ENCODE measurements at regions of chr10 and their contacts with region 1.

Region 1: GRCh38 chr10:88932539-88933256 is 19.9 kb downstream of the ACTA2 start:
- DNase-seq: peak in 7 of 9 experiments; percentile 17 to 72 (median 34)
- ATAC-seq: peak; percentile 78
- H3K4me3 ChIP-seq: no peak overlapping the region
- H3K4me3 Mint-ChIP-seq: no peak overlapping the region
- H3K27ac ChIP-seq: no peak overlapping the region
- H3K27ac Mint-ChIP-seq: no peak overlapping the region
- H3K4me1 ChIP-seq: peaks cover 5% of the 10 kb centered on the region
- H3K4me1 Mint-ChIP-seq: peaks cover 15% of the 10 kb centered on the region
- H3K27me3 ChIP-seq: no peaks in the 10 kb centered on the region
- H3K27me3 Mint-ChIP-seq: no peaks in the 10 kb centered on the region
- CTCF ChIP-seq: peak; percentile 75

Region 2: GRCh38 chr10:88565072-88565471 is 367.6 kb before region 1 on chr10:
- CTCF ChIA-PET with region 1: interaction called, 23 read pairs
- POLR2A ChIA-PET with region 1: no interaction called
- intact Hi-C with region 1: loop called (anchors 1 to 5 kb)
- DNase-seq: peak in 2 of 9 experiments; percentile 17 to 29
- ATAC-seq: no peak
- H3K4me3 ChIP-seq: no peak overlapping the region
- H3K4me3 Mint-ChIP-seq: no peak overlapping the region
- H3K27ac ChIP-seq: no peak overlapping the region
- H3K27ac Mint-ChIP-seq: no peak overlapping the region
- H3K4me1 ChIP-seq: no peaks in the 10 kb centered on the region
- H3K4me1 Mint-ChIP-seq: peaks cover 4% of the 10 kb centered on the region
- H3K27me3 ChIP-seq: no peaks in the 10 kb centered on the region
- H3K27me3 Mint-ChIP-seq: no peaks in the 10 kb centered on the region
- CTCF ChIP-seq: peak; percentile 31

Region 3: DNA sequence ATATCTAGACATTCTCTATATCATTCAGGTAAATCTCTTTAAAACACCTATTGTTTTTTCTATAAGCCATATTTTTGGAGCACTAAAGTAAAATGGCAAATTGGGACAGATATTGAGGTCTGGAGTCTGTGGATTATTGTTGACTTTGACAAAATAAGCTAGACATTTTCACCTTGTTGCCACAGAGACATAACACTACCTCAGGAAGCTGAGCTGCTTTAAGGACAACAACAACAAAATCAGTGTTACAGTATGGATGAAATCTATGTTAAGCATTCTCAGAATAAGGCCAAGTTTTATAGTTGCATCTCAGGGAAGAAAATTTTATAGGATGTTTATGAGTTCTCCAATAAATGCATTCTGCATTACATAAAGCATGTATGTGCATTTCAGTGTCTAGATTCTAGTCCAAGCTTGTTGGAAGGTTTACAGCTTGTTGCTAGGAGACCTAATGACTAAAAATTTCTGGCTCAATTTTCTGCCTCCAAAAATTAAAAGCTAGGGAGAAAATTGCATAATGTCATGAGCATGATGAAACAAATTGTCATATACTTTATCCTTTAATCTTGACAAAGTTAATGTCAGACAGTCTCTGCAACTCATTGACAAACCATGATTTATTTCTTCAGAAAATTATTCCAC is 111.8 kb before region 1 on chr10:
- CTCF ChIA-PET with region 1: interaction called, 13 read pairs
- POLR2A ChIA-PET with region 1: interaction called, 3 read pairs
- intact Hi-C with region 1: no loop called
- DNase-seq: no peak
- ATAC-seq: no peak
- H3K4me3 ChIP-seq: no peak overlapping the region
- H3K4me3 Mint-ChIP-seq: no peak overlapping the region
- H3K27ac ChIP-seq: no peak overlapping the region
- H3K27ac Mint-ChIP-seq: no peak overlapping the region
- H3K4me1 ChIP-seq: peaks cover 15% of the 10 kb centered on the region
- H3K4me1 Mint-ChIP-seq: peaks cover 43% of the 10 kb centered on the region
- H3K27me3 ChIP-seq: no peaks in the 10 kb centered on the region
- H3K27me3 Mint-ChIP-seq: no peaks in the 10 kb centered on the region
- CTCF ChIP-seq: no peak

Region 4: GRCh38 chr10:88843171-88843570 is 89.5 kb before region 1 on chr10:
- CTCF ChIA-PET with region 1: interaction called, 353 read pairs
- POLR2A ChIA-PET with region 1: no interaction called
- intact Hi-C with region 1: no loop called
- DNase-seq: no peak
- ATAC-seq: no peak
- H3K4me3 ChIP-seq: no peak overlapping the region
- H3K4me3 Mint-ChIP-seq: no peak overlapping the region
- H3K27ac ChIP-seq: no peak overlapping the region
- H3K27ac Mint-ChIP-seq: no peak overlapping the region
- H3K4me1 ChIP-seq: no peaks in the 10 kb centered on the region
- H3K4me1 Mint-ChIP-seq: no peaks in the 10 kb centered on the region
- H3K27me3 ChIP-seq: no peaks in the 10 kb centered on the region
- H3K27me3 Mint-ChIP-seq: no peaks in the 10 kb centered on the region
- CTCF ChIP-seq: no peak

Region 5: DNA sequence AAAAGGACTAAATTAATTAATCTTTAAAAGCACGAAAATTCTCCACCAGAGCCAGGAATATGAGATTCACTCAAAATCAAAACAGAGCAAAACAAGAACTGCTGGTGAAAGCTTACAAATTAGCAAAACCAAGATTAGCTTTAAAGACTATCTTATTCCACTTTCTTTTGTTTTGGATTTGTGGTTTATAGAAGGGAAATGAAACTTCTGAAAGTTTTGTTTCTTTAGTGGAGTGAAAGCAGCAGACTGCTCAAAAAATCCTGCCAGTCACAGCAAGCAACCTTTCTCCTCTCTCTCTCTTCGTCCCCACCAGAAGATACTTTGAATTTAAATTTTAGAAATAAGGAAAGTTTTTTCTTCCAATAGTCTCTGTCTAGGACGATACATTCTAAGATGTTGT is 12.1 kb after region 1 on chr10:
- CTCF ChIA-PET with region 1: interaction called, 52 read pairs
- POLR2A ChIA-PET with region 1: no interaction called
- intact Hi-C with region 1: no loop called
- DNase-seq: no peak
- ATAC-seq: no peak
- H3K4me3 ChIP-seq: no peak overlapping the region
- H3K4me3 Mint-ChIP-seq: no peak overlapping the region
- H3K27ac ChIP-seq: no peak overlapping the region
- H3K27ac Mint-ChIP-seq: no peak overlapping the region
- H3K4me1 ChIP-seq: no peaks in the 10 kb centered on the region
- H3K4me1 Mint-ChIP-seq: no peaks in the 10 kb centered on the region
- H3K27me3 ChIP-seq: no peaks in the 10 kb centered on the region
- H3K27me3 Mint-ChIP-seq: no peaks in the 10 kb centered on the region
- CTCF ChIP-seq: no peak

Region 6: GRCh38 chr10:89001024-89001728 is 68.5 kb after region 1 on chr10:
- CTCF ChIA-PET with region 1: interaction called, 11 read pairs
- POLR2A ChIA-PET with region 1: no interaction called
- intact Hi-C with region 1: loop called (anchors 2 to 5 kb)
- DNase-seq: peak in 4 of 9 experiments; percentile 27 to 64 (median 37)
- ATAC-seq: peak; percentile 56
- H3K4me3 ChIP-seq: peak overlapping the region in 1 of 2 experiments; percentile 38
- H3K4me3 Mint-ChIP-seq: peak overlapping the region; percentile 69
- H3K27ac ChIP-seq: peak overlapping the region; percentile 22 to 60
- H3K27ac Mint-ChIP-seq: peak overlapping the region; percentile 60
- H3K4me1 ChIP-seq: peaks cover 34% of the 10 kb centered on the region
- H3K4me1 Mint-ChIP-seq: peaks cover 55% of the 10 kb centered on the region
- H3K27me3 ChIP-seq: no peaks in the 10 kb centered on the region
- H3K27me3 Mint-ChIP-seq: no peaks in the 10 kb centered on the region
- CTCF ChIP-seq: no peak

Region 7: GRCh38 chr10:89047397-89047796 is 114.7 kb after region 1 on chr10:
- CTCF ChIA-PET with region 1: no interaction called
- POLR2A ChIA-PET with region 1: no interaction called
- intact Hi-C with region 1: no loop called
- DNase-seq: no peak
- ATAC-seq: no peak
- H3K4me3 ChIP-seq: no peak overlapping the region
- H3K4me3 Mint-ChIP-seq: no peak overlapping the region
- H3K27ac ChIP-seq: no peak overlapping the region
- H3K27ac Mint-ChIP-seq: no peak overlapping the region
- H3K4me1 ChIP-seq: no peaks in the 10 kb centered on the region
- H3K4me1 Mint-ChIP-seq: no peaks in the 10 kb centered on the region
- H3K27me3 ChIP-seq: no peaks in the 10 kb centered on the region
- H3K27me3 Mint-ChIP-seq: no peaks in the 10 kb centered on the region
- CTCF ChIP-seq: no peak

Region 8: GRCh38 chr10:89207181-89207800 is 274.6 kb after region 1 on chr10 and contains the start of gene CH25H:
- CTCF ChIA-PET with region 1: interaction called, 42 read pairs
- POLR2A ChIA-PET with region 1: no interaction called
- intact Hi-C with region 1: no loop called
- DNase-seq: peak in 6 of 9 experiments; percentile 30 to 61 (median 50)
- ATAC-seq: peak; percentile 39
- H3K4me3 ChIP-seq: peak within 1 kb of the TSS; percentile 51 to 67
- H3K4me3 Mint-ChIP-seq: peak within 1 kb of the TSS; percentile 81
- H3K27ac ChIP-seq: no peak within 1 kb of the TSS
- H3K27ac Mint-ChIP-seq: peak within 1 kb of the TSS; percentile 62
- H3K4me1 ChIP-seq: peaks cover 19% of the 10 kb centered on the region
- H3K4me1 Mint-ChIP-seq: peaks cover 16% of the 10 kb centered on the region
- H3K27me3 ChIP-seq: peaks cover 12 to 28% of the 10 kb centered on the region in 2 experiments
- H3K27me3 Mint-ChIP-seq: peaks cover 47% of the 10 kb centered on the region
- CTCF ChIP-seq: no peak
- total RNA-seq, gene CH25H: 0.44 to 0.54 TPM

Region 9: DNA sequence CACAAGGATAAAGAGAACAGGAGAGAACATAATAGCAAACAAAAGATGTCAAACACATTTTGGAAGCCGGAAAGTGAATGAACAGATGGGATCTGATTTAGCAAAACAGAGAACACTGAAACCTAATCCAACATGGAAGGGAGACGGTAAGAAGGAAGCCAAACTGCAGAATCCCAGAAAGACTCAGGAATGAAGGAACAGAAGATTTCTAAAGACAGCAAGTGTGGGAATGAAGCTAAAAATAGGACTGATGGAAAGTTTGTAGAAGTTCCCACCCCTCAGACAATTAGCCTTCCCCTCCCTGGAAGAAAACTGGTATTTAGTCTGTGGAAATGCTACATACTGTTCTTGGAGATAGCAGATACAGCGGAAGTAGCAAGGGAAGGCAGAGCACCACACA is 561.9 kb after region 1 on chr10:
- CTCF ChIA-PET with region 1: no interaction called
- POLR2A ChIA-PET with region 1: no interaction called
- intact Hi-C with region 1: no loop called
- DNase-seq: no peak
- ATAC-seq: no peak
- H3K4me3 ChIP-seq: no peak overlapping the region
- H3K4me3 Mint-ChIP-seq: no peak overlapping the region
- H3K27ac ChIP-seq: no peak overlapping the region
- H3K27ac Mint-ChIP-seq: no peak overlapping the region
- H3K4me1 ChIP-seq: no peaks in the 10 kb centered on the region
- H3K4me1 Mint-ChIP-seq: no peaks in the 10 kb centered on the region
- H3K27me3 ChIP-seq: no peaks in the 10 kb centered on the region
- H3K27me3 Mint-ChIP-seq: peaks cover 21% of the 10 kb centered on the region
- CTCF ChIP-seq: no peak